PC-9 (cell line): ENCODE measurements at regions of chr7 and their contacts with region 1.

Region 1: GRCh38 chr7:46352004-46352954 is 431.2 kb upstream of the IGFBP3 start:
- DNase-seq: peak; percentile 81 to 88
- H3K4me3 ChIP-seq: no peak overlapping the region
- H3K27ac ChIP-seq: peak overlapping the region; percentile 14; the same call in 1 of the 2 replicates
- H3K4me1 ChIP-seq: peaks cover 8% of the 10 kb centered on the region
- H3K27me3 ChIP-seq: no peaks in the 10 kb centered on the region
- CTCF ChIP-seq: peak; percentile 97

Region 2: DNA sequence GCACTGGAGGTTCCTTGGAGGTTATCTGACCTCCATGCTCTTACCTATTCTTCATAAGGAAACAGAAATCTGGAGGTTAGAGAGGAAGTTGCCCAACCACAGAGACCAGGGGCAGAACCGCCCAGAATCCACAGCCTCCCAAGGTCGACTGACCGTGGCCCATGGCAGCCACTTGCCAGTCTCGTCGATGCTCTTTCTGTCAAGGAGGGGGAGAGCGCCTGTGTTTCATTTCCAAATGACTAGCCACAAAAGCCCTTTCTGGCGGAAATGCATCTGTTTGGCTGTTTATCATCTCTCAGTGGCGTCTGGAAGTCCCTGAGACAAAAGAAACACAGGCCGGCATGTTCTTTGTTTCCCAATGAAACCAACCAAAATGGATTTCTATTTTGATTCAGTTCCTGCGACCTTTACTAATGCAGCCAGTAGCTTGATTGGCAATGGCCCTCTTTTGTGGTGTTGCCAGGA is 1191.8 kb before region 1 on chr7:
- CTCF ChIA-PET with region 1: no interaction called
- POLR2A ChIA-PET with region 1: no interaction called
- intact Hi-C with region 1: loop called (anchors 10 kb)
- DNase-seq: no peak
- H3K4me3 ChIP-seq: no peak overlapping the region
- H3K27ac ChIP-seq: no peak overlapping the region
- H3K4me1 ChIP-seq: no peaks in the 10 kb centered on the region
- H3K27me3 ChIP-seq: peaks cover 75% of the 10 kb centered on the region
- CTCF ChIP-seq: no peak

Region 3: DNA sequence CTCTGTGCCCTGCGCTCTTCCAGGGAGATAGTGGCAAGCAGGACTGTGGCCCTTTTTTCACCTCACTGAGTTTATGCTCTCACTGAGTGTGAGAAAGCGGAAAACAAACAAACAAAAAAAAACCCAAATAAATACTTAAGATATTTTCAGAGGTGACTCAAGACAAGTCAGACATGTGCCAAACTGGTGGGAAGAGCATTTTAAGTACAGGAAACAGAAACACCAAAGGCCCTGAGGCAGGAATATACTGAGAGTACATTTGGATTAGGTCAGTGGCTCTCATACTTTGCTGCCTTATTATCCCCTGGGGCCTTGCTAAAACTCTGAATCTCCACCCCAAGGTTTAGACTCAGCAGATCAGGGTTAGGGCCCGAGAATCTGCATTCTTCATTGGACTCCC is 319.3 kb before region 1 on chr7:
- CTCF ChIA-PET with region 1: no interaction called
- POLR2A ChIA-PET with region 1: no interaction called
- intact Hi-C with region 1: loop called (anchors 2 kb)
- DNase-seq: peak; percentile 54 to 99
- H3K4me3 ChIP-seq: no peak overlapping the region; the same call in 1 of the 2 replicates
- H3K27ac ChIP-seq: peak overlapping the region; percentile 92
- H3K4me1 ChIP-seq: peaks cover 58% of the 10 kb centered on the region
- H3K27me3 ChIP-seq: no peaks in the 10 kb centered on the region
- CTCF ChIP-seq: no peak

Region 4: DNA sequence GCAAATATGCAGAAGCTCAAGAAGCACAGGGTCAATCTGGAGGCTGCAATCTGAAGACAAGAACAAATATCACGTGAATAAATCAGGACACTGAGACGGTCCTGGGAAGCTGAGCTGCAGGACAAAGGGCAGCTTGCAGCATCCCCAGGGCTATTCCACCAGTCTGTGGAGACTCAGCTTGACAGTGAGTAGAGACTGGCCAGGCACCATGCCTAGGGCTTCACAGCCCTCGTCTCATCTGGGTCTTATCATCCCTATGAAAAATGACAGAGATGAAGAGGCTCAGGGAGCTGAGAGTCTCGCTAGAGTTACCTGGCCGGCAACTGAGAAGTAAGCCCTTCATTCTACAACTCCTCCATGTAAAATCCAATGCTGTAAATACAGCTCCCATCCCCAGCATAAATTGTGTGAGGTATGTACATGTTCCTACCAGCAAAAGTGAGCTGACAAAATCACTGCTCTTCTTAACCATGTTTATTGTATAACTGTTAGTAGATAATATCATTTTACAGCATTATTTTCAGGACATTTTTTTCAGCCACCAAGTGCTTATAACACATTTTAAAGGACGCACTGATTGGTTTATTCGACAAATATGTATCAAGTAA is 244.6 kb before region 1 on chr7:
- CTCF ChIA-PET with region 1: no interaction called
- POLR2A ChIA-PET with region 1: no interaction called
- intact Hi-C with region 1: no loop called
- DNase-seq: no peak
- H3K4me3 ChIP-seq: no peak overlapping the region
- H3K27ac ChIP-seq: no peak overlapping the region
- H3K4me1 ChIP-seq: no peaks in the 10 kb centered on the region
- H3K27me3 ChIP-seq: no peaks in the 10 kb centered on the region
- CTCF ChIP-seq: no peak

Region 5: DNA sequence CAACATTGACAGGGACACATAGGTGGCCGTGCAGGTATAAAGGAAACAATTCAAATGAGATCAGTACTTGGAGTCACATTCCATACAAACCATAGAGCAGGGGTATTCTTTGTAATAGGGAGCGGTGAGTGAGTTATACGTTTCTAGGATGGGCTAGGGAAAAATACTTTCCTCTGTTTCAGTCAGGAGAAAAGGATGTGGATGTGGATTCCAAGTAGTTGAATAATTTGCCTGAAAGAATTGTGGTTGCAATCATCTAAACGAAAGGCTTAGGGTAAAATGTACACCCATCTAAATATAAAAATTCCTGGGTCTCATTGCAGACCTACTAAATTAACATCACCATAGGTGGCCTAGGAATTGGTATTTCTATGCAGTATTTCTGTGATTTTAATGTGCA is 160.5 kb before region 1 on chr7:
- CTCF ChIA-PET with region 1: no interaction called
- POLR2A ChIA-PET with region 1: no interaction called
- intact Hi-C with region 1: loop called (anchors 1 kb)
- DNase-seq: peak; percentile 62 to 93
- H3K4me3 ChIP-seq: no peak overlapping the region
- H3K27ac ChIP-seq: peak overlapping the region; percentile 88
- H3K4me1 ChIP-seq: peaks cover 25% of the 10 kb centered on the region
- H3K27me3 ChIP-seq: no peaks in the 10 kb centered on the region
- CTCF ChIP-seq: no peak

Region 6: GRCh38 chr7:46291064-46291463 is 61.2 kb before region 1 on chr7:
- CTCF ChIA-PET with region 1: interaction called, 3 read pairs
- POLR2A ChIA-PET with region 1: no interaction called
- intact Hi-C with region 1: loop called (anchors 2 kb)
- DNase-seq: peak; percentile 72 to 83
- H3K4me3 ChIP-seq: no peak overlapping the region
- H3K27ac ChIP-seq: peak overlapping the region; percentile 77
- H3K4me1 ChIP-seq: peaks cover 30% of the 10 kb centered on the region
- H3K27me3 ChIP-seq: no peaks in the 10 kb centered on the region
- CTCF ChIP-seq: no peak

Region 7: GRCh38 chr7:46369933-46370654 is 17.8 kb after region 1 on chr7:
- CTCF ChIA-PET with region 1: no interaction called
- POLR2A ChIA-PET with region 1: no interaction called
- intact Hi-C with region 1: no loop called
- DNase-seq: peak; percentile 44 to 47
- H3K4me3 ChIP-seq: no peak overlapping the region
- H3K27ac ChIP-seq: no peak overlapping the region
- H3K4me1 ChIP-seq: no peaks in the 10 kb centered on the region
- H3K27me3 ChIP-seq: no peaks in the 10 kb centered on the region
- CTCF ChIP-seq: no peak

Region 8: GRCh38 chr7:46811529-46811928 is 459.2 kb after region 1 on chr7:
- CTCF ChIA-PET with region 1: no interaction called
- POLR2A ChIA-PET with region 1: no interaction called
- intact Hi-C with region 1: no loop called
- DNase-seq: no peak
- H3K4me3 ChIP-seq: no peak overlapping the region
- H3K27ac ChIP-seq: no peak overlapping the region
- H3K4me1 ChIP-seq: no peaks in the 10 kb centered on the region; the same call in 1 of the 2 replicates
- H3K27me3 ChIP-seq: no peaks in the 10 kb centered on the region
- CTCF ChIP-seq: no peak

Region 9: DNA sequence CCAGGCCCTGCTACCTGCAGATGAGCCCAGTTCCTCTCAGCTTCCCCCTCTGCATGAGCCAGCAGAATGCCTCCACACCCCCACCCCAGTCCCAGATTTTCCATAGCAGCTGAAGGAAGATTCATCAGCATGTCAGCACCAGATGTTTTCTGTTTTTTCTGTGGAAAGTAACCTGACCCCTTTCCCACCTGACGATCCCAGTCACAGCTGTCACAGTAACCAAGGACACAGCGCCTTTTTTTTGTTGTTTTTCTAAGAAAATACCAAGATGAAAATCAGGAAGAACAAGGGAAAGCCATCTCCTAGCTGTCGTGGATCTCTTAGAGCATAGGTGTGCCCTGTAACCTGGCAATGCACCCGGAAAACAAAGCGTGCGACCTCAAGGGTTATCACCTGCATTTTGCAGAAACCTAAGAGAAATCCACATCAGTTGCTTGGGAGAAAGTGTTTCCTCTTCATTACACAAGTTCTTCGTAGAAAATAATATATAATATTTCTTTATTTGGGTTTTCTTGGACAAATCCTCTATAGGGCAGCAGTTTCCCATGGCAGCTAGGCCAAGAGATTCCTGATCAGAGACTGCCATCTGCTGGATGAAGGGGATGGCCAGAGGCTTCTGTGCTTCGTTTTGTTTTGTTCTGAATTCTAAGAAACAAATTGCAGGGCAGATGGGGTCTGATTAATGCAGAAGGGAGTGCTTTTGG is 827.7 kb after region 1 on chr7:
- CTCF ChIA-PET with region 1: no interaction called
- POLR2A ChIA-PET with region 1: no interaction called
- intact Hi-C with region 1: loop called (anchors 2 kb)
- DNase-seq: peak; percentile 44 to 75
- H3K4me3 ChIP-seq: no peak overlapping the region
- H3K27ac ChIP-seq: no peak overlapping the region
- H3K4me1 ChIP-seq: no peaks in the 10 kb centered on the region
- H3K27me3 ChIP-seq: peaks cover 8% of the 10 kb centered on the region; the same call in 1 of the 2 replicates
- CTCF ChIP-seq: peak; percentile 97